SK-MEL-5 (cell line): ENCODE measurements at regions of chr9 and their contacts with region 1.

Region 1: GRCh38 chr9:85510830-85511504 is 230.8 kb downstream of the AGTPBP1 start:
- DNase-seq: no peak

Region 2: GRCh38 chr9:85276741-85277140 is 234.2 kb before region 1 on chr9:
- in situ Hi-C with region 1: no loop called
- DNase-seq: peak; percentile 58

Region 3: GRCh38 chr9:85290019-85290418 is 220.9 kb before region 1 on chr9:
- in situ Hi-C with region 1: no loop called
- DNase-seq: no peak

Region 4: GRCh38 chr9:85377731-85378289 is 133.2 kb before region 1 on chr9:
- in situ Hi-C with region 1: no loop called
- DNase-seq: no peak

Region 5: DNA sequence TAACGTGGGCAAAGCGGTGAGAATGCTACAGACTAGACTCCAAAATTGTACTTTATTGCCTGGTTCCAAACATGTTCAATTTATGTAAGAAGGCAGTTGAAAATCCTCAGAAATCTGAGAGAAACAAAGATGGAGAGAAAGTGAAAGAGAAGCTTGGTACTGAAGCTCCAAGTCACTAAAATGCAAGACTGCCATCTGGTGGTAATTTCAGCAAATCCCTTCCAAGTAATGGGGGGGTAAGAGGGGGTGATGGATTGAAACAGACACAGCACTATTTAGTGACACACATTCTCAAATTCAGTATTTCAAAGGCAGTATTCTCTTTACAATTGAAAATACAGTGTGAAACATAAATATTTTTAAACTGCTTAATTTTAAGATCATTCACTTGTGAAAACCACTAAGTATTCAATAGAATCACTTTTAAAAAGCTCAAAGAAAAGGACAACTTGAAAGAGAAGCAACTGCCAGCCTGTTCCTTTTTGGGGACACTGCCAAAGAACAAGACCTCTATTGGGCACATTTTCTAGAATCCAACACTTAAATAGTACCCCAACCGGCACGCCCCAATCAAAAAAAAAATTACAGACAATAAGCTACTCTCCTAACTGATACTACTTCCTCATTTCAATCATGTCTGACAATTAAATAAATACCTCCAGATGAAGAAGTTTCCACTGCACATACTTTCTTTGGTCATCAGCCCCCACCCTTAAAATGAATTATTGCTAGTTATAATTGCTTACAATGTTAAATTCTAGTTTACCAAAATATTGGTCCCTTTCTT is 99.3 kb after region 1 on chr9:
- in situ Hi-C with region 1: loop called (anchors 10 kb)
- DNase-seq: peak; percentile 86

Region 6: DNA sequence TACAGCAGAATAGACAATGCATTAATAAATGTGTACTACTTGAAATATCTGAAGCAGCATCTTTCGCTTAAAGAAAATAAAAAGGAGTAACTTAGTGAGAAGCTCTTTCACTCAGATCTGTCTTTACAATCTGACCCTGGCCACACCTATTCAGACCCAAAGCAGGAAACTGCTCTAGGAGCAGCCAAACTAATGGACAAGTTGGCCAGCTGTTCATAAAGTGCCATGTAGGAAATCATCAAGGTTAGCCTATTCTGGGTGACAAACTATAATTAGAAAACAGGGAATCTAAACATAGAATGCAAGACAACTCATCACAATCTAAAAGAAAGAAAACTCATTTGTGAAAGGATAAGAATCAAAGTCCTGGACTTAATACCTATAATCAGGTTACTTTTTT is 129.5 kb after region 1 on chr9:
- in situ Hi-C with region 1: no loop called
- DNase-seq: no peak